GM12878 (cell line): ENCODE measurements at regions of chrX and their contacts with region 1.

Region 1: GRCh38 chrX:11540532-11541377 is 125.0 kb downstream of the ARHGAP6 start:
- DNase-seq: peak; percentile 34
- ATAC-seq: peak; percentile 90
- H3K4me3 ChIP-seq: no peak overlapping the region
- H3K27ac ChIP-seq: no peak overlapping the region
- H3K4me1 ChIP-seq: no peaks in the 10 kb centered on the region
- H3K27me3 ChIP-seq: no peaks in the 10 kb centered on the region
- CTCF ChIP-seq: peak; percentile 9 to 49 (median 25); a peak in 4 of 6 replicates
- EP300 ChIP-seq: peak in 1 of 2 experiments; percentile 48; a peak in 1 of 4 replicates
- POLR2A ChIP-seq: no peak
- RAD21 ChIP-seq: peak; percentile 45

Region 2: GRCh38 chrX:10922158-10922557 is 618.6 kb before region 1 on chrX:
- CTCF ChIA-PET with region 1: no interaction called
- POLR2A ChIA-PET with region 1: no interaction called
- RAD21 ChIA-PET with region 1: no interaction called
- SMC1A ChIA-PET with region 1: no interaction called
- in situ Hi-C with region 1: no loop called
- intact Hi-C with region 1: no loop called
- DNase-seq: no peak
- ATAC-seq: no peak
- H3K4me3 ChIP-seq: no peak overlapping the region
- H3K27ac ChIP-seq: no peak overlapping the region
- H3K4me1 ChIP-seq: no peaks in the 10 kb centered on the region
- H3K27me3 ChIP-seq: no peaks in the 10 kb centered on the region
- CTCF ChIP-seq: no peak
- EP300 ChIP-seq: no peak
- POLR2A ChIP-seq: no peak
- RAD21 ChIP-seq: no peak

Region 3: DNA sequence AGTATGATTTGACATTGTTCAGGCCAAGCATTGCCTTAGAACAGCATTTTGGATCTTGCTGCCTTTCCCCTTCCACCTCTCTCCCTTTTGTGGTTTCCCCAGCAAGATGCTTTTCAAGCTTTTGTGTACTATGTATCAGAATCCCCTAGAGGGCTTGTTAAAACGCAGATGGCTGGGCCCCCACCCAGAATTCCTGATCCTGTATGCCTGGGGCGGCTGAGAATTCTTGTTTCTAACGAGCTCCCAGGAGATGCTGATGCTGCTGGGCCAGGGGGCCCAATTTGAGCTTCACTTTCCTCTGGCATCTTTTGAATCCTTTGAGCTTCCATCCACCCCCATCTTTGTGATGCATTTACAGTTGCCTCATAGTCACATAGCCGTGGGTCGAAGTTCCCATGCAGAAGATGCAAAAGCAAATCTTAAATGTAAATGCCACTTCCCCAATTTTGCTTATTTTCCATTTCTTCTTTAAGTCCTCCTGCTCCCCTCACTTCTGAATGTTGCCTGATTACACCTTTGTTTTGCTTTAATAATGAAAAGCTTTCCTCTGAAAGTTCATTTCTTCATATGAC is 411.1 kb before region 1 on chrX:
- CTCF ChIA-PET with region 1: no interaction called
- POLR2A ChIA-PET with region 1: no interaction called
- RAD21 ChIA-PET with region 1: no interaction called
- SMC1A ChIA-PET with region 1: no interaction called
- in situ Hi-C with region 1: no loop called
- intact Hi-C with region 1: no loop called
- DNase-seq: no peak
- ATAC-seq: no peak
- H3K4me3 ChIP-seq: no peak overlapping the region
- H3K27ac ChIP-seq: no peak overlapping the region
- H3K4me1 ChIP-seq: no peaks in the 10 kb centered on the region
- H3K27me3 ChIP-seq: no peaks in the 10 kb centered on the region
- CTCF ChIP-seq: no peak
- EP300 ChIP-seq: no peak
- POLR2A ChIP-seq: no peak
- RAD21 ChIP-seq: no peak

Region 4: GRCh38 chrX:11215191-11215921 is 325.4 kb before region 1 on chrX:
- CTCF ChIA-PET with region 1: no interaction called
- POLR2A ChIA-PET with region 1: no interaction called
- RAD21 ChIA-PET with region 1: no interaction called
- SMC1A ChIA-PET with region 1: no interaction called
- in situ Hi-C with region 1: no loop called
- intact Hi-C with region 1: no loop called
- DNase-seq: no peak
- ATAC-seq: no peak; the same call in 2 of the 3 replicates
- H3K4me3 ChIP-seq: no peak overlapping the region
- H3K27ac ChIP-seq: no peak overlapping the region
- H3K4me1 ChIP-seq: no peaks in the 10 kb centered on the region
- H3K27me3 ChIP-seq: no peaks in the 10 kb centered on the region
- CTCF ChIP-seq: no peak
- EP300 ChIP-seq: no peak
- POLR2A ChIP-seq: no peak
- RAD21 ChIP-seq: no peak

Region 5: DNA sequence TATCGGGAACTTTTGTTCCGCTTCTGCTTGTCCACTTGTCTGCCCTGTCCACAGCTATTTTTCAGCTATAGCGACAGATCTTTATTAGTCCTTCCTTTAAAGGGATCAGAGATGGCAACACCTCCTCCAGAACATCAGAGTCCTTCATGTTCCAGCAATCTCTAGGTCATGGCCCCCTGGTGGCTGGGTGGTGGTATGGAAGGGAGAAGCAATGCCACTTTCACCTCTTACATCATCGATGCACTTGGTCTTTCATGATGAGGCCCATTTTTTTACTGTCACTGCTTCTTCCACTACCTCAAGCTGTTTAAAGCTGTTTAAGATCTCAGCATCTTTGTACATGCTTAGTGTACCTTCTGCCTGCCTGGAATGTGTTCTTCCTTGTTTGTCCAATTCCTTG is 18.2 kb after region 1 on chrX:
- CTCF ChIA-PET with region 1: interaction called, 9 read pairs
- POLR2A ChIA-PET with region 1: interaction called, 3 read pairs
- RAD21 ChIA-PET with region 1: interaction called, 3 read pairs
- SMC1A ChIA-PET with region 1: interaction called, 14 read pairs
- in situ Hi-C with region 1: no loop called
- intact Hi-C with region 1: no loop called
- DNase-seq: no peak
- ATAC-seq: peak; percentile 81
- H3K4me3 ChIP-seq: no peak overlapping the region
- H3K27ac ChIP-seq: no peak overlapping the region
- H3K4me1 ChIP-seq: no peaks in the 10 kb centered on the region
- H3K27me3 ChIP-seq: no peaks in the 10 kb centered on the region
- CTCF ChIP-seq: peak; percentile 29 to 70 (median 68)
- EP300 ChIP-seq: no peak
- POLR2A ChIP-seq: no peak
- RAD21 ChIP-seq: no peak

Region 6: DNA sequence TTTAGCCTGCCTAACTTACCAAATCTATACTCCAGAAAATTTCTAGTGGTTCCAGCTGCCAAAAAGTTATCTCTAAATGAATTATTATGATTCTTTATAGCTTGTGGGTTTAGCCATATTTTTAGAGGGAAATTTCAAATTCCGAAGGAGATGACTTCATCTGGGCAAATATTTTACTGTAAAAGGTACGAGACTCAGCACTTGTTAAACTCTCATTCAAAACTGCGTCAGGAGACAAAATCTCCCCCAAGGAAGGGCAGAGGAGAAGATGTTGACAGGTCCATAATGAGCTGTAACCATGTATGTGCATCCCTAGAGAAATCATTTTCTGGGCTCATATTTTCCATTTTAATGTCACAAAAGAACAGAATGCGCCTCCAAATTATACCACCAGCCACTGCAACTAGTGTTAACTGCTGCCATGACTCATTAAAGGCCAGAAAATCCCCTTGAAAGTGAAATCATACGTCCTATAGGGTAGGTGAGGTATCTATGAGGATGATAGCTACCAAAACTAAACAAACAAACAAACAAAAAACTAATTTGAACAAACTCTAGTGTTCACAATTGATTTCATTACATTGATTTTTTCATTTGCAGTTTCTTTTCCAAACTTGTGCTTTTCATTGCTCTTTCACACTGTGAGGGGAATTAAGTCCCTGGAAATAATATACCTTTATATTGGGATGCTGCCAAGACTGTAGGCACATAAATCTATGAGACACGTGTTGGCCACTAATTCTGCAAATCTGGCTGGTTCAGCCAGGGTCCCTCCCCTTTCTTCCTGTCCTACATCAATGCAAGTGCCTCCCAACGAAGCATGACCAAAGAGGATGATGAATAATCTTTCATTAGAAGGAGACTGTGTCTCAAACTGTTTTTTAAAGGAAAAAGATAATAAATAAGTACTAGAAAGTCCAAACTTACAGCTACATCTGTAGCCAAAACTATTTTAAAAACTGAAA is 39.2 kb after region 1 on chrX:
- CTCF ChIA-PET with region 1: interaction called, 5 read pairs
- POLR2A ChIA-PET with region 1: no interaction called
- RAD21 ChIA-PET with region 1: interaction called, 15 read pairs
- SMC1A ChIA-PET with region 1: interaction called, 13 read pairs
- in situ Hi-C with region 1: no loop called
- intact Hi-C with region 1: no loop called
- DNase-seq: no peak
- ATAC-seq: peak; percentile 81
- H3K4me3 ChIP-seq: no peak overlapping the region
- H3K27ac ChIP-seq: no peak overlapping the region
- H3K4me1 ChIP-seq: no peaks in the 10 kb centered on the region
- H3K27me3 ChIP-seq: no peaks in the 10 kb centered on the region
- CTCF ChIP-seq: no peak
- EP300 ChIP-seq: no peak
- POLR2A ChIP-seq: no peak
- RAD21 ChIP-seq: no peak

Region 7: DNA sequence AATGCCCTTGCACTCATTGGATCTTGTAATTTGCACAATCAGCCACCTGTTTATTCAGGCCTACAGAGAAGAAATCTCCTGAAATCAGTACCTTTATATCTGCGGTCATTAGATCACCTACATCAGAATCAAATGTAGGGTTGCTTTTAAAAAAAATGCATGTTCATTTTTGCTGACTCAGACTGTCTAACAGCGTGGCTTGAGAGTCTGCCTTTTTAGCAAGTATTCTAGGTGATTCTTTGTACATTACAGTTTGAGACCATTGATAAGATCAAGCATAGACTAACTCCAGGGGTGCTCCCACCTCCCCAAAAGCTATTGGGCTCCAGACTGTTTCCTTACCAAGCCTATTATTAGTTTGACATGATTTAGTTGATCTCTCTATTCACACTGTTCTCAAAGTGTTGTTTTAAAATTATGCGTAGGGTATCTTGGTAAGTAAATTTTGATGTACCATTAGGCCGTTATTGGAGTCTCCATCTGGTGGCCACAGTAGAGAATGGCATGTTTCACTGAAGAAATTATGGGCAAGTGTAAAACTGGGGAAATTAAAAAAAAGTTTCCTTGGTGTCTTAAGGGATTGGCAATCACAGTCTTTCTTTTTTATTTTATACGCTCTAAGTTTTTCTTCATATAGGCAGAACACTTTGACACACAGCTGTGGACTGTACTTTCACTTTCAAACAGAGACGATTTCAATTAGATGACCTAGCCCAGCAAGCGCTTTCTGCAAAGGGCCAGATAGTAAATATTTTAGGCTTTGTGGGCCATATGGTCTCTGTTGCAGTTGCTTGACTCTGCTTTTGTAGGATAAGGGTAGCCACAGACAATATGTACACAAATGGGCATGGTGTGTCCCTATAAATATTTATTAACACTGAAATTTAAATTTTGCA is 183.6 kb after region 1 on chrX:
- CTCF ChIA-PET with region 1: interaction called, 35 read pairs
- POLR2A ChIA-PET with region 1: interaction called, 3 read pairs
- RAD21 ChIA-PET with region 1: interaction called, 19 read pairs
- SMC1A ChIA-PET with region 1: interaction called, 31 read pairs
- in situ Hi-C with region 1: no loop called
- intact Hi-C with region 1: no loop called
- DNase-seq: no peak
- ATAC-seq: peak; percentile 85
- H3K4me3 ChIP-seq: no peak overlapping the region
- H3K27ac ChIP-seq: no peak overlapping the region
- H3K4me1 ChIP-seq: no peaks in the 10 kb centered on the region
- H3K27me3 ChIP-seq: no peaks in the 10 kb centered on the region
- CTCF ChIP-seq: peak; percentile 63 to 68 (median 64)
- EP300 ChIP-seq: no peak
- POLR2A ChIP-seq: no peak
- RAD21 ChIP-seq: peak; percentile 64

Region 8: DNA sequence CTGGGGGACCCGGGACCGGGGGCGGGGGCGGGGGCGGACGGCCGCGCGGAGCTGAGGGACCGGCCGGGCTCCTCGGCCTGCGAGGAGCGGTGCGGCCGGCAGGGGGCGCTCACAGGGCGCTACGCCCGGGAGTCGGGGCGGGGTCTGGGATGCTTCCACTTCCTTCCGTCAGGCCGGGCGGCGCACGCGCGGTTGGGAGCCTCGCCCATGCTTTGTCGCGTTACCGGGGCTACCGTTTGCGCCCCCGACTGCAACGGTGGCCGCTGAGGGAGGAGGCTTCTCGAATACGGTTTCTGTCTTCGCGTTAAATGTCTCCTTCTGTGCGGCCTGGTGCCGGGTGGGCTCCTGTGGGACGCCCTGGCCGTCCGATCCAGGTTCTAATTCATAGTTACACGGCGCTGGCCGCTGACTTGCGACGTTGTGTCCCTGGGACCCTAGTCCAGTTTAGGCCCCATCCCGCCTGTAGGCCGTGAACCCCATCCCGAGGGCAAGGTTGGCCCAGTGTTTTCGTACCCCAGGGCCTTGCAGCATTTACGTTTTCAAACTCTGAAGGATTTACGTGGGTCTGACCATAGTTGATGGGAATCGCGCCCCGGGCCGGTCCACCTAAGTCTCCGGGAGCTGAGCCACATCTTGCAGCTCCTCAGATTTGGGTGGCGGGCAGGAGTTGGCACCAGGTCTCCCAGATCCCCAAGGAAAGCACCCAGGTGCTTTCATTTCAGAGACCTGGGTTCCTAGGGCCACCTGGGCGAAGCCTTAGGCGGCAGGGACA is 217.8 kb after region 1 on chrX:
- CTCF ChIA-PET with region 1: interaction called, 29 read pairs
- POLR2A ChIA-PET with region 1: no interaction called
- RAD21 ChIA-PET with region 1: interaction called, 7 read pairs
- SMC1A ChIA-PET with region 1: interaction called, 20 read pairs
- in situ Hi-C with region 1: no loop called
- intact Hi-C with region 1: no loop called
- DNase-seq: no peak
- ATAC-seq: peak; percentile 44
- H3K4me3 ChIP-seq: peak overlapping the region; percentile 60
- H3K27ac ChIP-seq: peak overlapping the region; percentile 90
- H3K4me1 ChIP-seq: peaks cover 7% of the 10 kb centered on the region; the same call in 1 of the 2 replicates
- H3K27me3 ChIP-seq: no peaks in the 10 kb centered on the region
- CTCF ChIP-seq: peak; percentile 34 to 68 (median 59); a peak in 4 of 6 replicates
- EP300 ChIP-seq: peak in 1 of 2 experiments; percentile 10; a peak in 1 of 4 replicates
- POLR2A ChIP-seq: no peak; the same call in 1 of the 2 replicates
- RAD21 ChIP-seq: peak; percentile 43